Right cardiac atrium (tissue), 5 donors: ENCODE measurements at regions of chr17 and their contacts with region 1.

Region 1: DNA sequence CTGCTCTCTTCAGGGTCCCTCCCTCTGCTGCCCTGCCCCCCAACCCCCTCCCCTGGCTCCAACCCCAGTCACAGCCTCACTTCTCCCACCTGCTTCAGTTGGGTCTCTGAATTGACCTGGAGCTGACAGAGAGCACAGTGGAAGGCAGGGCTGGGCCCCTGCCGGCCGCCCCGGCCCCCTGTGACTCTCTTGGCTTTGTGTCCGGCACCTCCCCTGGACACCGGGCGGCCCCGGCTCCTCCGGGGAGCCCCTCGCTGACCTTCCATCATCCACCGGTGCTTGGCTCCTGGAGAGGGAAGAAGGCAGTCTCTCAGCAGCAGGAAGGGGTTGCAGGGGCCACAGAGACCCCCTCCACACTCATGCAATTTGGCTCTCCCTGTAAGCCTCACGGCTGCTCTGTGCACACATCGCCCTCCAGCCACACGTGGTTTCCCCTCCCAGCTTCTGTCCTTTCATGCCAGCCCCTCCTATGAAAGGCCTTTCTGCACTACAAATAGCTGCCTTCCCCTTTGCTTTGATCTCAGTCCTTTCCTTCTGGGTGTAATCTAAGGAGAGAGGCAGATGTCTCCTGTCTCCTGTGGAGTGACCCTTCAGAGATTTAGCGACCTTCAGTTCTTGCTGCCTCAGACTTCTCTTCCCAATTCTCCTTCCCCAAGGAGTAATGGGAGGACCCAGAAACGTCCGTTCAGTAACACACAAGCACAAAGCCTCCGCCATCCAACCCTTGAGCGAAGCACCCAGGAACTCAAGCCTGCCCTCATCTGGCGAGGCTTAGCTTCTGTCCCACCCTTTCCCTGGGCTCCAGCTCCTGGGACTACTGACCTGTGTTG is 8.3 kb downstream of the NKIRAS2 start:
- DNase-seq: no peak
- ATAC-seq: no peak
- H3K4me3 ChIP-seq: no peak overlapping the region
- H3K27ac ChIP-seq: no peak overlapping the region
- H3K4me1 ChIP-seq: no peaks in the 10 kb centered on the region
- H3K27me3 ChIP-seq: no peaks in the 10 kb centered on the region

Region 2: DNA sequence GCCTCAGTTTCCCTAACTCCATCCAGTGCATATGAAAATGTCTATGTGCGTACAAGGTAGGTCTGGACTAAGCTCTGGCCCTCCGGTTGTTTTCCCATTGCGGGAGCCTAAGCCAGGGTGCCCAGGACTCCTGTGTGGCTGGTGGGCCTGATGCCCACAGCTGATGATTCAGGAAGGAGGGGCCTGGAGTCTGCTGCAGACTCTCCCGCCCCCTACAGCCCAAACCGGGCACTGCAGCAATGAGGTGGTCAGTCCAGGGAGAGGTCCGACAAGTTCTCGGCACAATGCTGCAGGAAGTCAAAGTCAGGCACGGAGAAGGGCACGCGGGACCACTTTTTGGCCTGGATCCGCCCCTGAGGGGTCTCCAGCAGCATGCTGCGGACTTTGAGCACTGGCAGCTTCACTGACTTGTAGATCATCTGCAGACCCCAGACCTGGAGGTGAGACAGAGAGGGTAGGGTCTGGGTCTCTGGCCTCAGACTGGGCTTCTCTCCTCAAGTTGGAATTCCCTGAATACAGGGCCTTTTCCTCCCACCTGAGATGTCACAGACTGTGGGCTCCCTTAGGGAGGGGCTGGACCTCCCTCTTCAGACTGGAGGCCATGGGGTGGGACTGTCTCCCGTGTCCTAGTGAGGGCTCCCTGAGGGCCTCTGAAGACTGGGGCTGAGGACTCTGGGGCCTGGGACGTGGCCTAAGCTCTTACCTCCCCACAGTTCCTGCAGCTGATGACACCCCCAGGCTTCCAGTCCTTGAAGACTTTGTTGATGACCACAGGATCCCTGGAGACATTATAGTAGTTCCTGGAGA is 73.5 kb after region 1 on chr17:
- intact Hi-C with region 1: loop called in 2 of 4 experiments (anchors 5 kb)
- DNase-seq: peak; percentile 80 to 93 (median 93)
- ATAC-seq: peak; percentile 77 to 83
- H3K4me3 ChIP-seq: no peak overlapping the region
- H3K27ac ChIP-seq: no peak overlapping the region
- H3K4me1 ChIP-seq: no peaks in the 10 kb centered on the region
- H3K27me3 ChIP-seq: no peaks in the 10 kb centered on the region